Prostate gland (tissue), 2 donors: ENCODE measurements at regions of chr11 and their contacts with region 1.

Region 1: DNA sequence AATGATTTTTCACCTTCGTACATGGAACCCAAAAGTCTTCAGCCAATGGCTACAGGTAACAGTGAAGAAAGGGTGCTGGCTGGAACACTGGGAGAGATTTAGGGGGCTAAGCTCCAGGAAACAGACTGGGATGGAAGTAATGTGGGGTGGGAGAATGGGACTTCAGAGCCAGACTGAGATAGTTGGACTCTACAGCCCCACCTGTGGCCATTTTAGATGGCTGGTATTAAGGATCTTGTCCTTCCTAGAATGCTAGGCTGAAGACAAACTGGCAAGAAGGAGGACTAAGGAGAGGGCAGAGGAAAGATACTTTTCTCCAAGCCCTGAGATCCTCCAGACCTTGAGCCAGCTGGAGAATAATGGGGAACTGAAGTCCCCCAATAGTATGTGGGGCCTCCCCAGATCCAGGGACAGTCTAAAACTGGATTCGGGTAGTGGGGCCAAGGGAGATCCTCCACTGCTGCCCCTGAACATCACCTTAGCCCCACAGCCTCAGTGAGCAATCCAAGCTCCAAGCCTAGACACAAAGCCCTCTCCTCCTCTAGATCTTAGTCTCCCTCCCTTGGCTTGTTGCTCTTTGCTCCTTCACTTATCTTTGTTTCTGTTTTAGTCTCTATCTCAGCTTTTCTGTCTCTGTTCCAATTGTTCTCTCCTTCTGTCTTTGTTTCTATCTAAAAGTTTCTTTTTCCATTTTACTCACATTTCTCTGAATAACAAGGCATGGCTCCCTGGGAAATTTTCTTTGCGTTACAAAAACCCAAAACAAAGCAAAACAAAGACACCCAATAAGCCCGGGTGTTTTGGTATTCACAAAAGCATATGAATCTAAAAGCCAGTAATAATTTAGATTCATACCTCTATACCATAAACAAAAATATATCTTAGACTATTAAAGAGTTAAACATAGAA is 16.2 kb upstream of the RRAS2 start:
- DNase-seq: no peak
- H3K4me3 ChIP-seq: no peak overlapping the region
- H3K27ac ChIP-seq: peak overlapping the region in 1 of 2 donors; percentile 2
- H3K4me1 ChIP-seq: no peaks in the 10 kb centered on the region
- H3K27me3 ChIP-seq: no peaks in the 10 kb centered on the region
- CTCF ChIP-seq: no peak
- POLR2A ChIP-seq: no peak

Region 2: DNA sequence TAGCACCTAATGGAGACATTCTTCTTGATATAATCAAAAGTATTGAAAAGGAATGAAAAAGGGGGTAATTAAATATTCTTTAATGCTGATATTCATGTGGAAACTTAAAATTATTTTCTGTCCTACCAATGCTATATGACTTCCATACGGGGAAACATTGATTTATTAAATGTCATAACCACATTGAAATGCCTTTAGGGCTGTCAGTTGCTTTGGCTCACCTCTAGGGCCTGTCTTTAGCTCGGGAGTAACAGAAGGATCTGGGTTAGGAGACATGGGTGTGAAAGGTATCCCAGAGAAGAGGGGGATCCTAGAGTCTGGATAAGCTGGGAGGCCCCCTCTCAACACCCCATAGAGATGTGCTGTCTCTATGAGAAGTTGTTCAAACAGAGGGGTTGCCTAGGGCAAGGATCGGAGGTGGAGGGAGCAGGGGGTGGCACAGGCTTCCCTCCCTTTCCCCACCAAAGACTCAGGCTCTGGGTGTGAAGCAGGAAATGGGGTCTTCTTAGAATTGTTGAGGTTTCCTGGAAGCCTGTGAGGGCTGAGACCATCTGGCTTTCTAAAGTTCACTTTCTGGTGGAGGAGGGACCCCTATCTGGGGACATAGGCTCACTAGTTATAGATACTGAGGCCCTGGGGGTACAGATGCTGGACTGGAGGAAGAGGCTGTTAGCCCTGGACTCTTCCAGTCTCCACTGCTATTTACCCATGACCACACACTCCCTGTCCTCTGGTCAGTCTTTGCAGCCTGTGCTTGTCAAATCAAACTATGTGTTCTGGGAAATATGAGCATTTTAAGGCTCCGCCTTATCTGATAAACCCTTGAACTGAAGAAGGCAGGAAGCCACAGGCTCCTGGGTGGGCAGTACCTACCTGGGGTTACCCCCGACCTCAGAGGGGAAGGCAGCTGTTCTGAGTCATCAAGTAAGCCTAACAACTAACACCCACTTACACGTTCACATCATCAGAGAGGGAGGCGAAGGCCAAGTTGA is 39.6 kb after region 1 on chr11:
- intact Hi-C with region 1: loop called (anchors 5 kb)
- DNase-seq: no peak
- H3K4me3 ChIP-seq: no peak overlapping the region
- H3K27ac ChIP-seq: no peak overlapping the region
- H3K4me1 ChIP-seq: no peaks in the 10 kb centered on the region
- H3K27me3 ChIP-seq: no peaks in the 10 kb centered on the region
- CTCF ChIP-seq: no peak
- POLR2A ChIP-seq: no peak